Spleen (tissue), 13 donors: ENCODE measurements at regions of chr14 and their contacts with region 1.

Region 1: GRCh38 chr14:74109369-74109768 is 24.6 kb downstream of the LIN52 start:
- DNase-seq: peak; percentile 6
- H3K4me3 ChIP-seq: no peak overlapping the region
- H3K27ac ChIP-seq: no peak overlapping the region
- H3K4me1 ChIP-seq: no peaks in the 10 kb centered on the region
- H3K27me3 ChIP-seq: no peaks in the 10 kb centered on the region
- CTCF ChIP-seq: no peak
- POLR2A ChIP-seq: no peak

Region 2: DNA sequence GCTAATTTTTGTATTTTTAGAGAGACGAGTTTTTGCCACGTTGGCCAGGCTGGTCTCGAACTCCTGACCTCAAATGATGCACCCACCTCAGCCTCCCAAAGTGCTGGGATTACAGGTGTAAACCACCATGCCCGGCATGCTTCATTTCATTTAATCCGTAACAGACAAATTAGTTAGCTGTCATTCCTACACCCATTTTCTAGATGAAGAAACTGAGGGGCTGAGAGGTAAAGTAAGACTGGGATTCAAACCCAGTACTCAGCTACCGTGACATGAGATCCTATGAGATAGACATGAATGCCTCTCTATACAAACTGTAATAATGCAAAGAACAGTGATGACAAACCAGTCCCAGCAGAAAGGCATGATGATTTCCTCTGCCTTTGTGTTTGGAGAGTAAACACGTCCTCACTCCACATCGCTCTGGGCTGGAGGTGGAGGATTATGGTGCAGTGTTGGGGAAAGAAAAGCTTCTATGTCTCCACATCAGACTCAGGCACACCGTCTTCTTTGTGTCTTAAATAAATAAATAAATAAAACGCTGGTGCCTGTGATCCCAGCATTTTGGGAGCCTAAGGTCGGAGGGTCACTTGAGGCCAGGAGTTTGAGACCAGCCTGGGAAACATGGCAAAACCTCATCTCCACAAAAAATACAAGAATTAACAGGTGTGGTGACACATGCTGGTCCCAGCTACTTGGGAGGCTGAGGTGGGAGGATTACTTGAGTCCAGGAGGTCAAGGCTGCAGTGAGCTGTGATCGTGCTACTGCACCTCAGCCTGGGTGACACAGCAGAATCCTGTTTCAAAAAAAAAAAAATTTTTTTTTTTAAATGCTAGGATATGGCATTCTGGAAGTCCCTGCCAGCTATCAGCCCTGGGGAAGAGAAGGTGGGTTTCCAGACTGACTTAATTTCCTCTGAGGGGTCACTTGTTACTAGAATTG is 140.3 kb after region 1 on chr14:
- intact Hi-C with region 1: loop called (anchors 2 kb)
- DNase-seq: no peak
- H3K4me3 ChIP-seq: no peak overlapping the region
- H3K27ac ChIP-seq: no peak overlapping the region
- H3K4me1 ChIP-seq: peaks cover 0 to 10% (median 8%) of the 10 kb centered on the region in 6 donors
- H3K27me3 ChIP-seq: peaks cover 0 to 86% (median 13%) of the 10 kb centered on the region in 7 donors
- CTCF ChIP-seq: no peak
- POLR2A ChIP-seq: no peak